A673 (cell line): ENCODE measurements at regions of chrX and their contacts with region 1.

Region 1: GRCh38 chrX:127390316-127390715 is 570.8 kb downstream of the PRR32 start:
- DNase-seq: no peak
- H3K4me3 ChIP-seq: no peak overlapping the region
- H3K27ac ChIP-seq: no peak overlapping the region
- H3K4me1 ChIP-seq: no peaks in the 10 kb centered on the region
- H3K27me3 ChIP-seq: no peaks in the 10 kb centered on the region
- CTCF ChIP-seq: no peak

Region 2: GRCh38 chrX:125424536-125424935 is 1965.8 kb before region 1 on chrX:
- CTCF ChIA-PET with region 1: interaction called, 13 read pairs
- POLR2A ChIA-PET with region 1: no interaction called
- intact Hi-C with region 1: no loop called
- DNase-seq: no peak
- H3K4me3 ChIP-seq: no peak overlapping the region
- H3K27ac ChIP-seq: no peak overlapping the region
- H3K4me1 ChIP-seq: no peaks in the 10 kb centered on the region
- H3K27me3 ChIP-seq: no peaks in the 10 kb centered on the region
- CTCF ChIP-seq: no peak

Region 3: GRCh38 chrX:128287693-128288092 is 897.4 kb after region 1 on chrX:
- CTCF ChIA-PET with region 1: no interaction called
- POLR2A ChIA-PET with region 1: no interaction called
- intact Hi-C with region 1: no loop called
- DNase-seq: no peak
- H3K4me3 ChIP-seq: no peak overlapping the region
- H3K27ac ChIP-seq: no peak overlapping the region
- H3K4me1 ChIP-seq: no peaks in the 10 kb centered on the region
- H3K27me3 ChIP-seq: no peaks in the 10 kb centered on the region
- CTCF ChIP-seq: no peak